ENCODE measurements at regions of chr5 and their contacts with region 1.

Region 1: GRCh38 chr5:14450018-14450524 is 131.5 kb upstream of the OTULINL start:
- DNase-seq: peak; percentile 36 to 59
- ATAC-seq: peak; percentile 54 to 63
- H3K4me3 ChIP-seq: no peak overlapping the region
- H3K27ac ChIP-seq: peak overlapping the region; percentile 75 to 80 (median 77)
- H3K4me1 ChIP-seq: peaks cover 33 to 51% of the 10 kb centered on the region in 2 donors
- H3K27me3 ChIP-seq: no peaks in the 10 kb centered on the region
- CTCF ChIP-seq: no peak
- POLR2A ChIP-seq: no peak

Region 2: GRCh38 chr5:14240359-14240758 is 209.7 kb before region 1 on chr5:
- in situ Hi-C with region 1: no loop called
- intact Hi-C with region 1: no loop called
- DNase-seq: no peak
- ATAC-seq: no peak
- H3K4me3 ChIP-seq: no peak overlapping the region
- H3K27ac ChIP-seq: no peak overlapping the region
- H3K4me1 ChIP-seq: peaks cover 57 to 67% of the 10 kb centered on the region in 2 donors
- H3K27me3 ChIP-seq: no peaks in the 10 kb centered on the region
- CTCF ChIP-seq: no peak
- POLR2A ChIP-seq: no peak

Region 3: DNA sequence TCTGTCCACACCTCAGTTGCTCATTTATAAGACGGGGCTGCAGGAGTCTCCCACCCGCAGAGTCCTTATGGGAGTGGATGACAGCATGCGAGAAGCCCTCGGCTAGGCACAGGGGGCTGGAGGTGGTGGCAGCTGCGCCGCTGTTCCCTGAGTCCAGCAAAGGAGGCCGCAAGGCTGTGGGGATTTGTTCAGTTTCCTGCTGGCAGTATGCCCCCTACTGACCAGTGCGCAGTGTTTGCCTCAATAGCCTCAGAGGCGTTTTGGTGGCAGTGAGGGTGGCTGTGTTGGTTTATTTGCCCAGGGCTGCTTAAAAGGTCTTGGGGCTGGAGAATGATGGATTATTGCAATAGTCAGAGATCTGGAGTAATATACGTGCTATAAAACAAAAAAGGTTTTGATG is 44.8 kb before region 1 on chr5:
- in situ Hi-C with region 1: loop called in 1 of 4 experiments (anchors 10 kb)
- intact Hi-C with region 1: no loop called
- DNase-seq: no peak
- ATAC-seq: no peak
- H3K4me3 ChIP-seq: no peak overlapping the region
- H3K27ac ChIP-seq: no peak overlapping the region
- H3K4me1 ChIP-seq: peaks cover 0 to 3% of the 10 kb centered on the region in 2 donors
- H3K27me3 ChIP-seq: no peaks in the 10 kb centered on the region
- CTCF ChIP-seq: no peak
- POLR2A ChIP-seq: no peak